Activated B cell treated with CpG ODN at 0.5 μM for 24 hours (primary cell): ENCODE measurements at regions of chr14 and their contacts with region 1.

Region 1: DNA sequence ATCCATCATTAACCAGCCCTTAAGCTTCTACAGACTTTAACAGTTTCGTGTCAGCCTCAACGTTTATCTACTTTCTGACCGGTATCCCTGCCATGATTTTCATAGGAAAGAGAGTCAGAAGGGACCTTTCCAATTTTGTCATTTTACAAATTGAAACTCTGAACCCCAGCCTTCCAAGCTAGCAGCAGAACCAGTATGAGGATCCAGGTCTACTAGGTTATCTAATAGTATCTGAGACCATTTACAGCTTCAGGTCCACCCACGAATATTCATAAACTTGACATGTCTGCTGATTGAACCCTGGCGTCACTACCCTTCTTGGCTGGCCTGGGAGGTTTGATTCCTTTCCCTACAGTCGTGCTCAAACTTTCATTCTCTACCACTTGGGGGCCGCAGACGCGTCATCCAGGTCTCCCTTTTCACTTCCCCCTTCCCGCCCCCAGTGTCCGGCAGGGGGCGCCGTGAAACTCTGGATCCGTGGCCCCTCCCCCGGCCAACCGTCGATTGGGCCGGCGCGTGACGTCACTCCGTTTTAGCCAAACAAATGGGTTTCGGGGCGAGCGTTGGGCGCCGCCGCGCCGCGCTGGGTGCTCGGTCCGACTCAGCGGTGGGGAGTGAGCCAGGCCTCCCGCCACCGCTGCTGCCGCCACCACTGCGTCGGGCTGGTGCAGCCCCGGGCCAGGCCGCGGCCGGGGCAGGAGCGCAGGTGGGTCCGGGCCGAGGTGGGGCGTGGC is at the start of gene FBXO34:
- DNase-seq: peak; percentile 100
- ATAC-seq: peak; percentile 89
- H3K4me3 Mint-ChIP-seq: peak within 1 kb of the TSS; percentile 90
- H3K27ac Mint-ChIP-seq: peak within 1 kb of the TSS; percentile 87
- H3K4me1 Mint-ChIP-seq: peaks cover 34% of the 10 kb centered on the region
- H3K27me3 Mint-ChIP-seq: no peaks in the 10 kb centered on the region
- CTCF ChIP-seq: peak; percentile 94
- total RNA-seq, gene FBXO34: 19.7 and 20.4 TPM in 2 replicates

Region 2: GRCh38 chr14:54902521-54903420 is 368.2 kb before region 1 on chr14 and contains the start of gene GCH1:
- CTCF ChIA-PET with region 1: no interaction called
- POLR2A ChIA-PET with region 1: no interaction called
- intact Hi-C with region 1: loop called (anchors 10 kb)
- DNase-seq: peak; percentile 85
- ATAC-seq: peak; percentile 87
- H3K4me3 Mint-ChIP-seq: peak within 1 kb of the TSS; percentile 89
- H3K27ac Mint-ChIP-seq: peak within 1 kb of the TSS; percentile 90
- H3K4me1 Mint-ChIP-seq: peaks cover 14% of the 10 kb centered on the region
- H3K27me3 Mint-ChIP-seq: no peaks in the 10 kb centered on the region
- CTCF ChIP-seq: no peak
- total RNA-seq, gene GCH1: 15.5 and 17.2 TPM in 2 replicates

Region 3: DNA sequence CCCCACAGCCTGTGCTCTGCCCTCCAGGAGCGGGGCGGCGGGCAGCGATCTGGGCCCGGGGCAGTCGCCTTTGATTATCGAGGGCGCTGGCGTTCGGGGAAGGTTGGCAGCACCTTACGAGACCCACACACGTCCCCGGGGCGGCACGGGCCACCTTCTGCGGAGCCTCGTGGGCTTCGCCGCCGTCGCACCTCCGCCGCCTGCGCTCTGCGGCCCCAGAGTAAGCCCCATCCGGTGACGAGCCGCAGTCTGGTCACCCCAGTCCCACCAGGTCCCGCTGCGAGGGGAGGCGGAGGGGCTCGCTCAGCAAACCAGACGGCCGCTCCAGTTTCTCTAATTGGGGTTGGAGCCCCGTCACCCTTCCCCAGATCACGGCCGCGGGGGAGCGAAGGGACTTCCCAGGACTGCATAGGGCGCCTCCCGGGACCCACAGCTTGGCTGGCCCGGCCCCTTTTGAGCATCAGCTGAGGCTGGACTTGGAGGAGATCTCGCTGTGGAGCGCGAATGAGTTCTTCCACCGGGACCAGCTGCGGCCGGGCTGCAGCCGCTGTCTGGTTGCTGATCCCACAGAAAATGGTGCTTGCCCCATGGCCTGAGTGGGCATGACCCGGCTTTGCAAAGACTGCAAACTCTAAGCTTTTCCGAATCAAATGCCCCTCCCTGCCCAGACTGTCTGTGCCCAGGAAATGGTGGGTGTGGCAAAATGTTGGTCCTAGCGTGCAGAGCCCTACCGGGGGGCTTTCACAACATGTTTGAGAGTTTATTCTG is 141.4 kb before region 1 on chr14:
- CTCF ChIA-PET with region 1: no interaction called
- POLR2A ChIA-PET with region 1: no interaction called
- intact Hi-C with region 1: loop called (anchors 1 kb)
- DNase-seq: peak; percentile 83
- ATAC-seq: peak; percentile 83
- H3K4me3 Mint-ChIP-seq: peak overlapping the region; percentile 90
- H3K27ac Mint-ChIP-seq: peak overlapping the region; percentile 88
- H3K4me1 Mint-ChIP-seq: peaks cover 46% of the 10 kb centered on the region
- H3K27me3 Mint-ChIP-seq: peaks cover 2% of the 10 kb centered on the region
- CTCF ChIP-seq: no peak

Region 4: DNA sequence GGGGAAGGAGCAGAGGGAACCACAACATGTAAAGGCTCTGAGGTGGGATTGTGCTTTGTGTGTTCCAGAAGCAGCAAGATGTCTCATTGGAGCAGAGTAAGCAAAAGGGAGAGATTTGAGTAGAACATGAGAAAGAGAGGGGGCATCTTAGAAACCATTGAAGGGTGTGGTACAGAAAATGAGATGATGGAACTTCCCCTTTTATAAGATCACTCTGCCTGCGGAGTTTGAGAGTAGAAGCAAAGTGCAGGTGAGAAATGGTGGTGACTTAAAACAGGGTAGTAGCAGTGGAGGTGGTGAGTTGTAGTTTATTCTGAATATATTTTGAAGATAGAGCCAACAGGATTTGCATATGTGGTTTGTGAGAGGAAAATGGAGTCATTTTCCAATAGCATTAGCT is 56.2 kb after region 1 on chr14:
- CTCF ChIA-PET with region 1: interaction called, 3 read pairs
- POLR2A ChIA-PET with region 1: no interaction called
- intact Hi-C with region 1: loop called (anchors 1 kb)
- DNase-seq: no peak
- ATAC-seq: peak; percentile 89
- H3K4me3 Mint-ChIP-seq: peak overlapping the region; percentile 8
- H3K27ac Mint-ChIP-seq: peak overlapping the region; percentile 87
- H3K4me1 Mint-ChIP-seq: peaks cover 43% of the 10 kb centered on the region
- H3K27me3 Mint-ChIP-seq: no peaks in the 10 kb centered on the region
- CTCF ChIP-seq: no peak

Region 5: GRCh38 chr14:55373784-55374705 is 103.0 kb after region 1 on chr14:
- CTCF ChIA-PET with region 1: no interaction called
- POLR2A ChIA-PET with region 1: no interaction called
- intact Hi-C with region 1: loop called (anchors 5 kb)
- DNase-seq: no peak
- ATAC-seq: peak; percentile 37
- H3K4me3 Mint-ChIP-seq: no peak overlapping the region
- H3K27ac Mint-ChIP-seq: no peak overlapping the region
- H3K4me1 Mint-ChIP-seq: peaks cover 10% of the 10 kb centered on the region
- H3K27me3 Mint-ChIP-seq: no peaks in the 10 kb centered on the region
- CTCF ChIP-seq: no peak

Region 6: DNA sequence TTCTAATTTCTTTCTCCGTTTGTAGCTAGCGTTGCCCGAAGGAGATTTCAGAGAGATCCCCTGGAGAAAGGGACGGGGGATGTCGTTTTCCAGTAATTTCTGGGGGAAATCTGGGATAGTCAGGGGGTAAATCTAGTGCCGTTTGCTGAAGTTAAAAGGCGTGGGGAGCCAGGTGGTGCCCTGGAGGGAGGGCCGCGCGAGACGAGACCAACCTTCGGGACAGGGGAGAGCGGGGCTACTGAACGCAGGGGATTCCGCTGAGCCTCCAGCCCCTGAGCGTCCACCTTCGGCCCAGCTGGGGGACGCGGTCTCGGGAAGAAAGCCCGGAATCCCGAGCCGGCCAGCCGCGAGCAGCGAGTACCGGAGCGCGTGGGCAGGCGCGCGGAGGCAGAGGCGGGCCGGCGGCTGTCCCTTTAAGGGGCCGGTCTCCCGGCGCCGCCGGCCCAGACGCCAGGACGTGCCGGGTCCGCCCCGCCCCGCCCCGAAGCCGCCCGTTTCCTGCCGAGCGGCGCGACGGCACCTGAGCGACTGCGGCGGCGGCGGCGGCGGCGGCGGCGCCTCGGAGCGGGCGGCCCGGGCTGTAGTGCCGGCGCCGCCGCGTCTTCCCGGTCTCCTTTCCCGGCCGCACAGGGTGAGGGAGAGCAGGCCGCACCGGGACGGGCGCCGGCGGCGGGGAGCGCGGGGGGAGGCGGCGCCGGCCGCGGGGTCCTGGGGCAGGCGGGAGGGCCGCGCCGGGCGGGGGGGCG is 308.9 kb after region 1 on chr14 and contains the start of gene KTN1:
- CTCF ChIA-PET with region 1: no interaction called
- POLR2A ChIA-PET with region 1: no interaction called
- intact Hi-C with region 1: loop called (anchors 2 kb)
- DNase-seq: peak; percentile 84
- ATAC-seq: peak; percentile 86
- H3K4me3 Mint-ChIP-seq: peak within 1 kb of the TSS; percentile 96
- H3K27ac Mint-ChIP-seq: peak within 1 kb of the TSS; percentile 91
- H3K4me1 Mint-ChIP-seq: peaks cover 33% of the 10 kb centered on the region
- H3K27me3 Mint-ChIP-seq: no peaks in the 10 kb centered on the region
- CTCF ChIP-seq: no peak
- total RNA-seq, gene KTN1: 108 and 116 TPM in 2 replicates